Natural killer cell (primary cell): ENCODE measurements at regions of chr4 and their contacts with region 1.

Region 1: GRCh38 chr4:1856042-1856788 is at the start of gene LETM1:
- DNase-seq: peak; percentile 84 to 95
- ATAC-seq: peak; percentile 96 to 99 (median 96)
- H3K4me3 ChIP-seq: peak within 1 kb of the TSS; percentile 92
- H3K4me3 Mint-ChIP-seq: peak within 1 kb of the TSS; percentile 83
- H3K27ac ChIP-seq: peak within 1 kb of the TSS; percentile 53
- H3K27ac Mint-ChIP-seq: peak within 1 kb of the TSS; percentile 74 to 77
- H3K4me1 ChIP-seq: peaks cover 20% of the 10 kb centered on the region
- H3K4me1 Mint-ChIP-seq: peaks cover 26 to 40% of the 10 kb centered on the region in 2 donors
- H3K27me3 ChIP-seq: no peaks in the 10 kb centered on the region
- H3K27me3 Mint-ChIP-seq: no peaks in the 10 kb centered on the region
- CTCF ChIP-seq: no peak
- total RNA-seq, gene LETM1: 40.4 to 56.5 (median 55.7) TPM

Region 2: GRCh38 chr4:1721004-1721665 is 135.1 kb before region 1 on chr4 and contains the starts of genes TACC3 and TMEM129:
- intact Hi-C with region 1: loop called (anchors 5 kb)
- DNase-seq: peak; percentile 90 to 98
- ATAC-seq: peak; percentile 80 to 90 (median 84)
- H3K4me3 ChIP-seq: peak within 1 kb of the TSS; percentile 52
- H3K4me3 Mint-ChIP-seq: peak within 1 kb of the TSS; percentile 89
- H3K27ac ChIP-seq: peak within 1 kb of the TSS; percentile 77
- H3K27ac Mint-ChIP-seq: peak within 1 kb of the TSS; percentile 92 to 93
- H3K4me1 ChIP-seq: peaks cover 64% of the 10 kb centered on the region
- H3K4me1 Mint-ChIP-seq: peaks cover 25 to 39% of the 10 kb centered on the region in 2 donors
- H3K27me3 ChIP-seq: no peaks in the 10 kb centered on the region
- H3K27me3 Mint-ChIP-seq: no peaks in the 10 kb centered on the region
- CTCF ChIP-seq: no peak
- total RNA-seq, gene TACC3: 23.4 to 43.7 (median 32.5) TPM
- total RNA-seq, gene TMEM129: 18.2 to 26.9 (median 20.8) TPM

Region 3: GRCh38 chr4:1870578-1871443 is 14.6 kb after region 1 on chr4 and contains the start of gene NSD2:
- intact Hi-C with region 1: loop called (anchors 2 kb)
- DNase-seq: peak; percentile 84 to 97
- ATAC-seq: peak; percentile 71 to 88 (median 76)
- H3K4me3 ChIP-seq: peak within 1 kb of the TSS; percentile 48
- H3K4me3 Mint-ChIP-seq: peak within 1 kb of the TSS; percentile 86
- H3K27ac ChIP-seq: peak within 1 kb of the TSS; percentile 84
- H3K27ac Mint-ChIP-seq: peak within 1 kb of the TSS; percentile 91 to 94
- H3K4me1 ChIP-seq: peaks cover 19% of the 10 kb centered on the region
- H3K4me1 Mint-ChIP-seq: peaks cover 18 to 20% of the 10 kb centered on the region in 2 donors
- H3K27me3 ChIP-seq: no peaks in the 10 kb centered on the region
- H3K27me3 Mint-ChIP-seq: no peaks in the 10 kb centered on the region
- CTCF ChIP-seq: no peak
- total RNA-seq, gene NSD2: 36.4 to 51.0 (median 48.3) TPM

Region 4: DNA sequence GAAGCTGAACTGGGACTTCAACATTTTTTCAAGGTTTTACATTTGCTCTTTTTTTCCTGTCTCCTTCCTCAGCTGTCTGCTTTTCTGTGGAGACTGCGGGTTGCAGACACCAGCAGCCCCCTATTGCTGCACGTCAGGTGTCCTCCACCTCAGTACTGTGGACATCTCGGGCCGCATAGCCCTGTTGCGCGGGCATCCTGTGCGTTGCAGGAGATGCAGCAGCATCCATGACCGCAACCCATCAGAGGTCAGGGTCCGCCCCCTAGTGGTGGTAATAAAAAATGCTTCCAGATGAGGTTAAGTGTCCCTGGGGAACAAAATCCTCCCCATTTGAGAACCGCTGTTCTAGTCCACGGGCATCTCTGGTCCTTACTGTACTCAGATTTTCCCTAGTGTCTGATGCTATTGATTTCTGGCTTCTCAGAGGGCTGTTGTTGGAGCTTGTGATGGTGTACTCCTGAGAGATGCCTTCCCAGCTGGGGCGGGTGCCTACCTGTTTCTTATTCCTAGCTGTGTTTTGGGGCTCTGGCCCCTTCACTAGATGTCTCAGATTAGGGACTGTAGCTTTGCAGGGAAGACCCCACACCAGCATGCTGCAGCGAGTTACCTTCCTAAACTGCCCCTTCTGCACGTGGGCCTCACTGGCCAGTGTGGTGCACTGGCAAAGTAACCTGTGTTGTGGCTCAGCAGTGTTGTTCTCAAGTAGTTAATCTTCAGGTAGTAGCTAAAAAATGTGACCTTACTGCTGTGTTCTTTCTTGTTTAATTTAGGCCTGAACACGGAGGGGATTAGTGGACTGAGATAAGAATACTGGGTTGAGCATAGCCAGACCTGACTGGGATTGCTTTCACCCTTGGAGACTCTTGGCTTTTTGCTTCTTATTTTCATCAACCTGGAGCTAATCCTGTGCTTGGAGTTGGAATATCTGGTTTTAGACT is 43.2 kb after region 1 on chr4:
- intact Hi-C with region 1: loop called (anchors 1 kb)
- DNase-seq: peak; percentile 57 to 91
- ATAC-seq: peak; percentile 90 to 99 (median 98)
- H3K4me3 ChIP-seq: no peak overlapping the region
- H3K4me3 Mint-ChIP-seq: no peak overlapping the region
- H3K27ac ChIP-seq: no peak overlapping the region
- H3K27ac Mint-ChIP-seq: peak overlapping the region; percentile 19 to 64
- H3K4me1 ChIP-seq: peaks cover 3% of the 10 kb centered on the region
- H3K4me1 Mint-ChIP-seq: peaks cover 10 to 15% of the 10 kb centered on the region in 2 donors
- H3K27me3 ChIP-seq: no peaks in the 10 kb centered on the region
- H3K27me3 Mint-ChIP-seq: no peaks in the 10 kb centered on the region
- CTCF ChIP-seq: peak; percentile 96